ENCODE measurements at regions of chr5 and their contacts with region 1.

Region 1: DNA sequence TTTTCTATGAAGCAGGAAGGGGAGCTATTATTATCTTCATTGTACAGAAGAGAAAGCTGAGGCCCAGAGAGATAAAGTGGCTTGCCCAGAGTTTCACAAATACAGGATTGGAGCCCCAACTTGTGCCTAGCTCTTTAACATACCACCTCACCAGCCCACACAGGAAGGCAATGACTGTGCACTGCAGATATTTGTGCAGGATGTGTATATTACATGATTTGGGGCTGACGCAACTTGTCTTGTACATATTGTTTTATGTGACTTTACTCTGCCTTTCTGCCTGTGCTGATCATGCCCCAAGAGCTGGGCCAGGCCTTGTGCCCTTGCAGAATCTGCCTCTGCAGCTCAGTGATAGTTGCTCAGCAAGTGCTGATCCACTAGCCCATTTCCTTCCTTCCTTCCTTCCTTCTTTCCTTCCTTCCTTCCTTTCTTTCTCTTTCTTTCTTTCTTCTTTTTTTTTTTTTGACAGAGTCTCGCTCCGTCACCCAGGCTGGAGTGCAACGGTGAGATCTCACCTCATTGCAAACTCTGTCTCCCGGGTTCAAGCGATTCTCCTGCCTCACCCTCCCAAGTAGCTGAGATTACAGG is 106.6 kb upstream of the TBCA start:
- DNase-seq: no peak
- ATAC-seq: no peak
- H3K4me3 ChIP-seq: no peak overlapping the region
- H3K27ac ChIP-seq: no peak overlapping the region
- H3K4me1 ChIP-seq: peaks cover 12% of the 10 kb centered on the region
- H3K27me3 ChIP-seq: no peaks in the 10 kb centered on the region
- CTCF ChIP-seq: no peak
- EP300 ChIP-seq: no peak
- POLR2A ChIP-seq: no peak
- RAD21 ChIP-seq: no peak

Region 2: DNA sequence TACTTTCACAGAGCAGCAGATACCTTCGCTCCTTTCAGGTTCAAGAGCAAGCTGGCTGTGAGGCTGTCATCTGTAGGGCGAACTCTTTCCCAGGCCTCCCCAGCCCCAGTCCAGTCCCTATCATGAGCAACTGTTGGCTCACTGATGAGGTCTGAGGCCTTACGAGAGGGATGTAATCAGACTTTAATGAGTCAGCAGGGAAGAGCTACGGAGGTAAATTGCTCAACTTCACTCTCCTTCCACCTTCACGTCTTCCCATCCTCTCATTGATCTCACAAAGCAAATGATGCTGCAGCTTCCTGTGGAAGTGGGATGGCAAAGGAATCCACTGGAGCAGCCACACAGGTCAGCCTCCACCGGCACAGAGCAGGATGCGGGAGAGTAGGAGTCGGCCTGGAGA is 24.0 kb after region 1 on chr5:
- CTCF ChIA-PET with region 1: interaction called, 5 read pairs
- POLR2A ChIA-PET with region 1: interaction called, 3 read pairs
- RAD21 ChIA-PET with region 1: interaction called, 4 read pairs
- SMC1A ChIA-PET with region 1: interaction called, 12 read pairs
- in situ Hi-C with region 1: no loop called
- intact Hi-C with region 1: no loop called
- DNase-seq: no peak
- ATAC-seq: no peak
- H3K4me3 ChIP-seq: no peak overlapping the region
- H3K27ac ChIP-seq: no peak overlapping the region
- H3K4me1 ChIP-seq: no peaks in the 10 kb centered on the region
- H3K27me3 ChIP-seq: no peaks in the 10 kb centered on the region
- CTCF ChIP-seq: no peak
- EP300 ChIP-seq: no peak
- POLR2A ChIP-seq: no peak
- RAD21 ChIP-seq: no peak

Region 3: DNA sequence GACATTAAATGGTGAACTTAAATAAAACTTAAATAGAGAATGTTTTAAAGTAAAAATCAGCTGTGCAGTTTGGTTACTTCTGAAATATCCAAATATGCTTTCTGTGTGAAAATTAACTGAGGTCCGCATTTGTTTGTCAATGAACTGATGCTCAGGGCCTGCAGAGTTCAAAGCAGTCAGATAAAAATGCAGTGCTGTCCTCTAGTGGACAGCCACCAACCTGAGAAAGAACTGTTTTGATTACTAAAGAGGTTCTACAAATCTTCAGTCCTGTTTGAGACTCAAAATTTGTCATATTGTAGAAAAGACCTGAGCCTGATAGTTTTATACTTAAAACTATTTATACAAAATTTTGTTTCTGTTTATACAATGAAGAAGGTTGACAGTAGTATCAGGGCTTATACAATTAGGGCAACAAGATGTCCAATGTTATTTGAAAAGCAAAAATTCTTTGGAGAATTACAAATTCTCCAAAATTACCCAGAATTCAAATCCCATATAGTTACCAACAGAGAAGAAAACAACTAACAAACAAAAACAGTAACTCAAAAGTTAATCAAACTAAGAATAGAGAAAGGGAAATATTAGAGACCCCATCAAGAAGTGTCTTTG is 125.7 kb after region 1 on chr5:
- CTCF ChIA-PET with region 1: interaction called, 4 read pairs
- POLR2A ChIA-PET with region 1: no interaction called
- RAD21 ChIA-PET with region 1: interaction called, 4 read pairs
- SMC1A ChIA-PET with region 1: interaction called, 11 read pairs
- in situ Hi-C with region 1: no loop called
- intact Hi-C with region 1: no loop called
- DNase-seq: no peak
- ATAC-seq: peak; percentile 84
- H3K4me3 ChIP-seq: no peak overlapping the region
- H3K27ac ChIP-seq: no peak overlapping the region
- H3K4me1 ChIP-seq: peaks cover 3% of the 10 kb centered on the region; the same call in 1 of the 2 replicates
- H3K27me3 ChIP-seq: no peaks in the 10 kb centered on the region
- CTCF ChIP-seq: peak; percentile 77 to 83 (median 79)
- EP300 ChIP-seq: no peak
- POLR2A ChIP-seq: no peak
- RAD21 ChIP-seq: peak; percentile 89